Posterior cingulate gyrus (tissue), 11 donors: ENCODE measurements at regions of chr11 and their contacts with region 1.

Region 1: GRCh38 chr11:76380967-76381719 is at the starts of genes GVQW3 and THAP12:
- DNase-seq: peak; percentile 93 to 99 (median 96)

Region 2: GRCh38 chr11:76235233-76236091 is 145.7 kb before region 1 on chr11:
- intact Hi-C with region 1: loop called (anchors 5 kb)
- DNase-seq: peak; percentile 88 to 99 (median 94)

Region 3: DNA sequence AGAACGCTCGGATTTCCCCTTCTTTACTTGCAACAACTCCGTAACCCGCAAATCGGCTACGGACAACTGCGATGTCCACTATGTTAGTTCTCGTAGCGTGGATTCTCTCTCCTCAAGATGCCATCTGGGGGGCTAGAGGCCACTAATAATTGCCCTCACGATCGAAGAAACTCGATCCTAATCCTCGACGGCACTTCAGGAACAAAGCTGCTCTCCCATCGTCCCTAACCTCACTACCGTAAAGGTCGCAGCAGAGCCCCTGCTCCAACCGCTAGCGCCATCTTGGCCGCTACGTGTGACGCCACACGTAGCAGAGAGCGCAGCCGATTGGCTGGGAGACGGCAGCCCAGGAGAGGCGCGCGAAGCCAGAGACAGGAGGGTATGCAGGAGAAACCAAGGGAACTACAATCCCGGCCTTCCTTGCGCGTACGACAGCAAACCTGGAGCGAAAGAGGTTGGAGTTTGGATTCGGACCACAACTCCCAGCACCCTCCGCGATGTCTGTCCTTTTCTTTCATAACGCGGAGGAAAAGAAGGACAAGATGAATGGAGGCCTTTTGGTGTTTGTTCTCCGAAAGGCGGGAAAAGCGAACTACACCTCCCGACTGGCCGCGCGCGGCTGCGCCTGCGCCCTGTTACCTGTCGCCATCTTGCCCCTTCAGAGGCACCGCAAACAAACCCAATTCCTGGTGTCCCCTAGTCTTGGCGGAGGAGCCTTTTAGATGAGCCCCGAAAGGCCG is 63.4 kb after region 1 on chr11 and contains the start of gene EMSY:
- intact Hi-C with region 1: loop called (anchors 1 kb)
- DNase-seq: peak; percentile 98 to 100 (median 98)